IMR-90 (cell line): ENCODE measurements at regions of chr5 and their contacts with region 1.

Region 1: DNA sequence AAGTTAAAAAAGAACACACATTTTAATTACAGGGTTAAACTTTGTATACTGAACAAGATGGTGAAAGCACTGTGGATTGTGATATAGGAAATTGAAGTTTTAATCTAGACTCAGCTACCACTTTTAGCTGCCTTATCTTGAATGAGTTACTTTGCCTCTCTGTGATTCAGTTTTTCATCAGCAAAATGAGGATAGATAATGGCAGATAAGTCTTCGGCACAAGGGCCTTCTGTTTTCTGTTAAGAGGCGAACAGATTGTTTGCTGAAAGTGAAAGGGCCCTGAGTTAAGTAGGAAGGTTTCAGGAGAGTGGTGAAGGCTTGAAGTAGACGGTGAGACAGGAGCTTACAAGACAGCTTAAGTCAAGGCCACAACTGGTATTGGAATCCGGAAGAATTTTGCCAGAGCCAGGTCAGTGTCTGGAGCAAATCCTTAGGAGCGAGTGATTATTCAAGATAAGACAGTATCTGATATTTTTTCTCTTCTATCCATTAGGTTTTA is 7.8 kb downstream of the RARS1 start:
- DNase-seq: no peak
- ATAC-seq: no peak
- H3K4me3 ChIP-seq: no peak overlapping the region
- H3K27ac ChIP-seq: no peak overlapping the region
- H3K4me1 ChIP-seq: no peaks in the 10 kb centered on the region
- H3K27me3 ChIP-seq: no peaks in the 10 kb centered on the region
- CTCF ChIP-seq: no peak
- POLR2A ChIP-seq: no peak
- RAD21 ChIP-seq: no peak

Region 2: DNA sequence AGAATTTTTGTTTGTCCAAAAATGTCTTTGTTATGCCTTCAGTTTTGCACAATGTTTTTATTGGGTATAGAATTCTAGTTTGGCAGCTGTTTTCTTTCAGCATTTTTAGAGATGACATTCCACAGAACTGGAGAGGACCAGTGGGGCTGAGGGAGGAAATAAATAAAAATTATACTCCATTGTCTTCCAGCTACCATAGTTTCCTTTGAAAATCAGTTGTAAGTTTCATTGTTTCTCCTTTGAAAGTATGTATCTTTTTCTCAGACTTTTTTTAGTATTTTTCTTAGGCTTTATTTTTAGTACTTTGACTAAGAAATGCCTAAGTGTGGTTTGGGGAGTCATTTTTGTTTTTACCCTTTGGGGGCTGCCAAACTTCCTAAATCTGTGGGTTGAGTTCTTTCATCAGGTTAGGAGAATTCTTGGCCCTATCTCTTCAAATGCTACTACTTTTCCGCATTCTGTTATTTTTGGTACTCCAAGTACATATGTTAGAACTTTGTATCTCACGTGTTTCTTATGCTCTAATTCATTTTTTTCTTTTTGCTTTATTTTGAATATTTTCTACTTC is 19.8 kb after region 1 on chr5:
- CTCF ChIA-PET with region 1: interaction called, 3 read pairs
- POLR2A ChIA-PET with region 1: no interaction called
- dilution Hi-C with region 1: no loop called
- in situ Hi-C with region 1: no loop called
- intact Hi-C with region 1: loop called (anchors 2 kb)
- DNase-seq: no peak
- ATAC-seq: no peak
- H3K4me3 ChIP-seq: no peak overlapping the region
- H3K27ac ChIP-seq: no peak overlapping the region
- H3K4me1 ChIP-seq: no peaks in the 10 kb centered on the region
- H3K27me3 ChIP-seq: no peaks in the 10 kb centered on the region
- CTCF ChIP-seq: no peak
- POLR2A ChIP-seq: no peak
- RAD21 ChIP-seq: no peak

Region 3: GRCh38 chr5:168552146-168552545 is 58.0 kb after region 1 on chr5:
- CTCF ChIA-PET with region 1: no interaction called
- POLR2A ChIA-PET with region 1: no interaction called
- dilution Hi-C with region 1: no loop called
- in situ Hi-C with region 1: no loop called
- intact Hi-C with region 1: loop called (anchors 5 kb)
- DNase-seq: peak; percentile 97
- ATAC-seq: peak; percentile 64
- H3K4me3 ChIP-seq: no peak overlapping the region
- H3K27ac ChIP-seq: no peak overlapping the region
- H3K4me1 ChIP-seq: 0 out of 2 replicates have a peak, but pooled peaks cover 4% of the 10 kb centered on the region
- H3K27me3 ChIP-seq: no peaks in the 10 kb centered on the region
- CTCF ChIP-seq: no peak
- POLR2A ChIP-seq: no peak
- RAD21 ChIP-seq: no peak